ENCODE measurements at regions of chr12 and their contacts with region 1.

Region 1: DNA sequence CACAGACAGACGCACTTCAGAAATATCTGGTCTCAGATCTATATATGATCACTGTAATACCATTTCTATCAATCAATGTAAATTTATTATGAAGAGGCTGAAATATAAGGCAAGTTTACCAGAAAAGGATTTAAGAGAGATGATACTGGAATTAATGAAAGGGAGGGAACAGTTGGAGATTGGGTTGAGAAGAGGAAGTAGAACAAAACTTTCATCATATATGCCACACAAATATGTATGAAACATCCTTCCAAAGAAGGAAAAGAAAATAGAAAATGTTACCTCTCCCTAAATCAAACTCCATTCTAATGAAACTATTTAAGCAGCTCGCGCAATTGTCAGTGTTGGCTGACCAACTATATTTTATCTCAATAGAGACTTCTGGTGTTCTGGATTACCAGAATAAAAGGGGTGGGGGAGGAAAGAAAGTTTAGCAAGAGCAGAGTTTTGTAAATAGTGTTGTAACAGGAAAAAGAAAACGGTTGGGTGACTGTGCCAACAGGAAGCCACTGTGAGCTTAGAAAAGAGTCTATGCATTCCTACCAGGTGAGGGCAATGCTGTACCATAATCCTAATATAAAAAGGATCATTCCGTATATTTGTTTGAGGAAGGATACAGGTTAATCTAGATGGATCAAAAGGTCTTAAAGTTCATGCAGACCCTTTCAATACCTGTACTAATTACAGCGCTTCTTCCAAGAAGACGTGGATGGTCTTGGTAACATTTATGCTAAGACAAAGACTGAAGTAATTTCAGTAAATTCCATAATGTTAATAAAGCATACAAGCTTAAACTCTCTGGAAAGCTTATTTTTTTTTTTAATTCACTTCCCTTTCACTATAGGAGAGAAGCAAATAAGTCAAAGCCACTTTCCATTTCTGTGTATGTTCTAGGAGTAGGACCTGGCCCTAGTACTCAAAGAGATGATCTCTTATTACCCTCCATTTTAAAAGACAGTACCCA is 14.5 kb upstream of the LLPH start:
- DNase-seq: peak; percentile 44
- H3K4me3 ChIP-seq: no peak overlapping the region
- H3K27ac ChIP-seq: peak overlapping the region; percentile 29
- H3K4me1 ChIP-seq: peaks cover 8% of the 10 kb centered on the region
- CTCF ChIP-seq: peak; percentile 75

Region 2: DNA sequence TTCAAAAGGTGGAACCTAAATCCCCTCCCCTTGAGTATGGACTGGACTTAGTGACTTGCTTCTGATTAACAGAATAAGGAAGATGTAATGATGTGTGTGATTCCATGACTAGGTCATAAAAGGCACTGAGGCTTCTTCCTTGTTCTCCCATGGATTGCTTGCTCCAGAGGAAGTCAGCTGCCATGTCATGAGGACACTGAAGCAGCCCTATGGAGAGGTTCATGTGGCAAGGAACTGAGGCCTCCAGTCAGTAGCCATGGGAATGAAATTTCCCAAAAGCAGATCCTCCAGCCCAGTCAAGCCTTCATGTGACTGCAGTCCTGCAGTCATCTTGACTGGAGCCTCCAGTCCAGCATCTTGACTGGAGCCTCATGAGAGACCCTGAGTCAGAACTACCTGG is 14.1 kb after region 1 on chr12:
- CTCF ChIA-PET with region 1: no interaction called
- POLR2A ChIA-PET with region 1: interaction called, 12 read pairs
- intact Hi-C with region 1: no loop called
- DNase-seq: no peak
- H3K4me3 ChIP-seq: no peak overlapping the region
- H3K27ac ChIP-seq: no peak overlapping the region
- H3K4me1 ChIP-seq: no peaks in the 10 kb centered on the region
- CTCF ChIP-seq: no peak